ENCODE measurements at regions of chr11 and their contacts with region 1.

Region 1: DNA sequence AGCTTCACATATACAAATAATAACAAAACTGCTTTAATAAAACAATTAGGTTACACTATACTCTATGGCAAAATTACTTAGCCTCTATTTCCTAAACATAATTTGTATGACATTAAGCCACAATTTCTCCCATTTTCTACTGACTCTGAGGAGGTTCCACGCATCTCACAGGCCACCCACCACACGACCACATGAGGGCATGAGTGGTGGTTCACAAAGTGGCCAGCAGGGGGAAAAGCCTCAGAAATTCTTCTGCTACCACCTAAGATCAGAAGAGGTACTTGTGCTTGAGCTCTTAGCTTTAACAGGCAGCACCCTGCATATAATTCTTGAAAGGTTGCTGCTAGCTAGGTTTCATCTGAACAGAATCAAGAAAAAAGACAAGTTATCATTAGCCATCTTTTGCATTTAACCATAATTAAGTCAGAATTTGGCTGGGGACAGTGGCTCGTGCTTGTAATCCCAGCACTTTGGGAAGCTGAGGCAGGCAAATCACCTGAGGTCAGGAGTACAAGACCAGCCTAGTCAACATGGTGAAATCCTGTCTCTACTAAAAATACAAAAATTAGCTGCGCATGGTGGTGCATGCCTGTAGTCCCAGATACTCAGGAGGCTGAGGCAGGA is 7.7 kb downstream of the LPXN start:
- DNase-seq: peak; percentile 84
- H3K4me3 Mint-ChIP-seq: no peak overlapping the region
- H3K27ac Mint-ChIP-seq: peak overlapping the region; percentile 71
- H3K4me1 Mint-ChIP-seq: peaks cover 60% of the 10 kb centered on the region
- H3K27me3 Mint-ChIP-seq: no peaks in the 10 kb centered on the region

Region 2: GRCh38 chr11:58354727-58355126 is 213.3 kb before region 1 on chr11:
- CTCF ChIA-PET with region 1: no interaction called
- POLR2A ChIA-PET with region 1: no interaction called
- intact Hi-C with region 1: no loop called
- DNase-seq: no peak
- H3K4me3 Mint-ChIP-seq: no peak overlapping the region
- H3K27ac Mint-ChIP-seq: no peak overlapping the region
- H3K4me1 Mint-ChIP-seq: no peaks in the 10 kb centered on the region
- H3K27me3 Mint-ChIP-seq: peaks cover 7% of the 10 kb centered on the region

Region 3: DNA sequence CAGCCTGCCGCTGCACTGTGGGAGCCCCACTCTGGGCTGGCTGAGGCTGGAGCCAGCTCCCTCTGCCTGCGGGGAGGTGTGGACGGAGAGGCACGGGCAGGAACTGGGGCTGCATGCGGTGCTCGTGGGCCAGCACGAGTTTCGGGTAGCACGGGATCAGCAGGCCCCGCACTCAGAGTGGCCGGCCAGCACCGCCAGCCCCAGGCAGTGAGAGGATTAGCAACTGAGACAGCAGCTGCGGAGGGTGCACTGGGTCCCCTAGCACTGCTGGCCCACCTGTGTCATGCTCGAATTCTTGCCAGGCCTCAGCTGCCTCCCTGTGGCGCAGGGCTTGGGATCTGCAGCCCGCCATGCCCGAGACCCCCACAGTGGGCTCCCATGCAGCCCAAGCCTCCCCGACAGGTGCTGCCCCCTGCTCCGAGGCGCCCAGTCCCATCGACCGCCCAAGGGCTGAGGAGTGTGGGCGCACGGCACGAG is 36.1 kb before region 1 on chr11:
- CTCF ChIA-PET with region 1: interaction called, 32 read pairs
- POLR2A ChIA-PET with region 1: no interaction called
- intact Hi-C with region 1: no loop called
- DNase-seq: no peak
- H3K4me3 Mint-ChIP-seq: no peak overlapping the region
- H3K27ac Mint-ChIP-seq: no peak overlapping the region
- H3K4me1 Mint-ChIP-seq: peaks cover 45% of the 10 kb centered on the region
- H3K27me3 Mint-ChIP-seq: no peaks in the 10 kb centered on the region

Region 4: DNA sequence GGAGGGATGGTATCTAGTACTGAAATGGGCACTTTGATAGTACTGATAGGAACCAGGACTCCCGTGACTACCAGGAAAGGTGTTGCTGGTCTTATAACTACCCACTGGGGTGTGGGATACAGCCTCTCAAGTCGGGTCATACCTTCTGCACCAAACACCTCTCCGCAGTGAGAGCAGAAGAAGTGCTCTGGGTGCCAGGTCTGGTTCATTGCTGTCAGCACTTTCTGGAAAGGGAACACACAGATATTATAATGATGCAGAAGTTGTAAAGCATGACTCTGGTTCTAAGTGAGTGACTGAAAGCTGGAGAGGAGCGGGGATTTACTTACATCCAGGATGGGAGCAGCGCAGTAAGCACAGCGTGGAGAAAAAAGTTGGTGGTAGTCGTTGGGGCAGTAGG is 18.4 kb before region 1 on chr11:
- CTCF ChIA-PET with region 1: interaction called, 19 read pairs
- POLR2A ChIA-PET with region 1: interaction called, 3 read pairs
- intact Hi-C with region 1: no loop called
- DNase-seq: no peak
- H3K4me3 Mint-ChIP-seq: no peak overlapping the region
- H3K27ac Mint-ChIP-seq: no peak overlapping the region
- H3K4me1 Mint-ChIP-seq: peaks cover 5% of the 10 kb centered on the region
- H3K27me3 Mint-ChIP-seq: no peaks in the 10 kb centered on the region

Region 5: GRCh38 chr11:58592760-58593472 is 24.9 kb after region 1 on chr11:
- CTCF ChIA-PET with region 1: interaction called, 26 read pairs
- POLR2A ChIA-PET with region 1: interaction called, 6 read pairs
- intact Hi-C with region 1: loop called (anchors 1 kb)
- DNase-seq: peak; percentile 76
- H3K4me3 Mint-ChIP-seq: no peak overlapping the region
- H3K27ac Mint-ChIP-seq: peak overlapping the region; percentile 45
- H3K4me1 Mint-ChIP-seq: peaks cover 73% of the 10 kb centered on the region
- H3K27me3 Mint-ChIP-seq: no peaks in the 10 kb centered on the region

Region 6: DNA sequence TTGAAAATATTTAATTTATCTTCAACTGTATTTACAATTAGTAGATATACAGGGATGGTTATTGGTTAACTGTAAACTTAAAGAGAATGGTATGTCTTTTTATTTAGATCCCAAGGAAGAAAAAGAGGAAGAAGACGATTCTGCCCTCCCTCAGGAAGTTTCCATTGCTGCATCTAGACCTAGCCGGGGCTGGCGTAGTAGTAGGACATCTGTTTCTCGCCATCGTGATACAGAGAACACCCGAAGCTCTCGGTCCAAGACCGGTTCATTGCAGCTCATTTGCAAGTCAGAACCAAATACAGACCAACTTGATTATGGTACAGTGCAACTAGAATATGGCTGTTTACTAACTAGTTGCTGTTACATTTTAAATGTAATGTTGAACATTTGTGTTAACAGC is 41.7 kb after region 1 on chr11:
- CTCF ChIA-PET with region 1: interaction called, 16 read pairs
- POLR2A ChIA-PET with region 1: no interaction called
- intact Hi-C with region 1: no loop called
- DNase-seq: no peak
- H3K4me3 Mint-ChIP-seq: no peak overlapping the region
- H3K27ac Mint-ChIP-seq: no peak overlapping the region
- H3K4me1 Mint-ChIP-seq: peaks cover 58% of the 10 kb centered on the region
- H3K27me3 Mint-ChIP-seq: no peaks in the 10 kb centered on the region

Region 7: GRCh38 chr11:58629857-58630256 is 61.9 kb after region 1 on chr11:
- CTCF ChIA-PET with region 1: interaction called, 81 read pairs
- POLR2A ChIA-PET with region 1: no interaction called
- intact Hi-C with region 1: no loop called
- DNase-seq: peak; percentile 24
- H3K4me3 Mint-ChIP-seq: no peak overlapping the region
- H3K27ac Mint-ChIP-seq: no peak overlapping the region
- H3K4me1 Mint-ChIP-seq: peaks cover 7% of the 10 kb centered on the region
- H3K27me3 Mint-ChIP-seq: no peaks in the 10 kb centered on the region

Region 8: DNA sequence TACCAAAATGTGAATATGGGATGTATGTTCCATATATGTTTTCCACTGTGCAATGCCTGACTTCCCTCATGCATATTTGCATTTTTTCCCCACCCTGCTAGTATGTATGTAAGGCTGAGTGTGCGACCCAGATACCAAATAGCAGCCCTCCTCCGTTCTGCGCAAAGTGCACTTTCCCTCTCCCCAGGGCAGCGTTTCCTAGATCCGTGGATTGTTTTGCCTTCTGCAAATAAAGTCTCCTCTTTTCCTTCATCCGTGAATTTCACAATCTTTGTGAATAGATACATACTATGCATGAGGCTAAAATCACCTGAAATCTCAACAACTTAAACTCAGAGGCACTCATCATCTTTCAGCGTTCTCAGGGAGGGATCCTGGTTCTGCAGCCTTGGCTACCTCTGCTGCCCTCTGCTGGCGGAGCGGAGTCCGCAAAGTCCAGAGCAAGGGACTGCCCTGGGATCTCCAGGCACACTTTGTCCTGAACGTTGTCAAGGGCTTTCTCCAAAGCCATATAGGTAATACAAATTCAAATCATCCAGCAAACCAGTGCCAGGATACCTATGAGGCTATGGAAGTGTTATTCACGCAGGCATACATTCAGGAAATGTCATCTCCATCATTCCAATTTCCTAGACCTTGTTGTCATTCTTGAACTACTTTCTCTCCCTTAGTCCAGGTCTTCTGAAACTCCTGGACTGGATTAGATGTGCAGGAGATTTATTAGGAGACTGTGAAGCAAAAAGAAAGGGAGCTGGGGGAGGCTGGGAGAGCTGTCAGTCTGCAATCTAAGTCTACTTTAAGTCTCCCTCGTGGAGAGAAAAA is 107.5 kb after region 1 on chr11:
- CTCF ChIA-PET with region 1: interaction called, 10 read pairs
- POLR2A ChIA-PET with region 1: no interaction called
- intact Hi-C with region 1: no loop called
- DNase-seq: peak; percentile 82
- H3K4me3 Mint-ChIP-seq: no peak overlapping the region
- H3K27ac Mint-ChIP-seq: no peak overlapping the region
- H3K4me1 Mint-ChIP-seq: no peaks in the 10 kb centered on the region
- H3K27me3 Mint-ChIP-seq: peaks cover 4% of the 10 kb centered on the region

Region 9: GRCh38 chr11:59040607-59041006 is 472.6 kb after region 1 on chr11:
- CTCF ChIA-PET with region 1: no interaction called
- POLR2A ChIA-PET with region 1: no interaction called
- intact Hi-C with region 1: no loop called
- DNase-seq: no peak
- H3K4me3 Mint-ChIP-seq: no peak overlapping the region
- H3K27ac Mint-ChIP-seq: no peak overlapping the region
- H3K4me1 Mint-ChIP-seq: no peaks in the 10 kb centered on the region
- H3K27me3 Mint-ChIP-seq: peaks cover 14% of the 10 kb centered on the region

Measured in activated CD4-positive, alpha-beta memory T cell treated with anti-CD3 and anti-CD28 coated beads for 36 hours (primary cell).